Gastrocnemius medialis (tissue), 4 donors: ENCODE measurements at regions of chr17 and their contacts with region 1.

Region 1: DNA sequence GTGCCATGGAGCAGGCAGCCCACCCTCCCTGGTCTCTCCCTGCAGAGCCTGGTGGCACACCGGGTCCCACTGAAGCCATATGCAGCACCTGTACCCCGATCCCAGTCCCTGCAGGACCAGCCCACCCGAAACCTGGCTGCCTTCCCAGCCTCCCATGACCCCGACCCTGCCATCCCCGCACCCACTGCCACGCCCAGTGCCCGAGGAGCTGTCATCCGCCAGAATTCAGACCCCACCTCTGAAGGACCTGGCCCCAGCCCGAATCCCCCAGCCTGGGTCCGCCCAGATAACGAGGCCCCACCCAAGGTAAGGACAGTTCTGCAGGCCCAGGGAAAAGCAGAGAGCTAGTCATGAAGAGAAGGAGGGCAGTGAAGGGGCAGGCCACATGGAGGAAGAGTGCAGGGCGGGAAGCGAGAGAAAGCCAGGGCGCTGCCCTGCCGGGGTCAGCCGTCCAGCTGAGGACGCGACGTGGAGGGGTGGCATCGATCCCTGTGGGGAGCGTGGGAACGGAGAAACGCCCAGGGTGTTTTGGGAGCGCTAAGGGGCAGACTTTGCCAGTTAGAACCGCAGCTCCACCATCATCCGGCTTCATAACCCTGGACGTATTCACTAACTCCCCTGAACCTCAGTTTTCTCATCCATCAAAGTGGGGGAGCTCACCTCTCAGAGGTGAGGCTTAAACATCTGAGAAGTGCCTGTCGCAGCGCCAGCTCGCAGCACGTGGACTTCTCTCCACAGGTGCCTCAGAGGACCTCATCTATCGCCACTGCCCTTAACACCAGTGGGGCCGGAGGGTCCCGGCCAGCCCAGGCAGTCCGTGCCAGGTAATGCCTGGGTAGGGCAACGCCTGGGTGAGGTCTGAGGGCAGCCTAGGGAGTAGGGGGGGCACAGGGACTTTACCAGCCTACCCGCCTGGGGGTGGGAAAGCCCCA is 7.7 kb upstream of the C17orf107 start:
- DNase-seq: no peak
- ATAC-seq: no peak
- H3K4me3 ChIP-seq: no peak overlapping the region
- H3K27ac ChIP-seq: no peak overlapping the region
- H3K4me1 ChIP-seq: no peaks in the 10 kb centered on the region
- H3K27me3 ChIP-seq: no peaks in the 10 kb centered on the region
- CTCF ChIP-seq: no peak
- POLR2A ChIP-seq: no peak

Region 2: GRCh38 chr17:4733073-4733531 is 158.6 kb before region 1 on chr17:
- in situ Hi-C with region 1: no loop called
- intact Hi-C with region 1: loop called (anchors 1 kb)
- DNase-seq: no peak
- ATAC-seq: no peak
- H3K4me3 ChIP-seq: no peak overlapping the region
- H3K27ac ChIP-seq: no peak overlapping the region
- H3K4me1 ChIP-seq: peaks cover 0 to 12% of the 10 kb centered on the region in 2 donors
- H3K27me3 ChIP-seq: peaks cover under 1 to 5% (median 2%) of the 10 kb centered on the region in 3 donors
- CTCF ChIP-seq: no peak
- POLR2A ChIP-seq: no peak

Region 3: DNA sequence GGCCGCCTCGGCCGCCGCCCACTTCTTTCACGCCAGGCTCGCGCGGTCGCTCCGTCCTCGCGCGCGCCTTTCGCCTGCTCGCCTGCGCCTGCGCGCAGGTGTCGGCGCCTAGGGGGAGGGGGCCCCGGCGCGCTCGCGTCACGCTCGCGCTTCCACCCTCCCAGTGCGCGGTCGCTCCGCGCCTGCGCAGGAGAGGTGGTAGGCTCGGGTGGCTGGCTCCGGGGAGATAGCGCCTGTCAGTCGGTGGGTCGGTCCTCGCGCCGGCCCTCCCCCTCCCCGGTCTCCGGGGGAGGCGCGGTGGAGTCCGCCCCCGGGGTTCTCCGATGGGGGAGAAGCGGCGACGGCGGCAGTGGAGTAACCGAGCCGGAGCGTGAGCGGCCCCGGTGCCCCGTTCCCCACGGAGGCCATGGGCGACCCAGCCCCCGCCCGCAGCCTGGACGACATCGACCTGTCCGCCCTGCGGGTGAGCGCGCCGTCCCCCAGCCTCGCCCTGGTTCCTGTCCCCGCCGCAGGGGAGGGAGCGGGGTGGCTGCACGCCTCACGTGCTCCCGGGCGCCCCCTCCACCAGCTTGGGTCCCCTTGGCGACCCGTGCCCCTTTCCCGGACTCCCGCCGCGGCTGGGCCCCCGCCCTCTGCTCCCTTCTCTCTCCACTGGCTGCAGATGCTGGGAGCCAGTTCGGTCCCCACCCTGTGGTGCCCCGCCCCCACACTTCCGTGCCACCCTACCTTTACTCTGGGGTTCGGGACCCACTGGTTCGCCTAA is 58.3 kb before region 1 on chr17 and contains the start of gene MINK1:
- in situ Hi-C with region 1: no loop called
- intact Hi-C with region 1: no loop called
- DNase-seq: peak; percentile 78 to 88
- ATAC-seq: peak; percentile 95 to 96
- H3K4me3 ChIP-seq: peak within 1 kb of the TSS; percentile 74 to 89 (median 80)
- H3K27ac ChIP-seq: peak within 1 kb of the TSS; percentile 83 to 96 (median 89)
- H3K4me1 ChIP-seq: peaks cover 19 to 34% of the 10 kb centered on the region in 2 donors
- H3K27me3 ChIP-seq: no peaks in the 10 kb centered on the region
- CTCF ChIP-seq: no peak
- POLR2A ChIP-seq: peak; percentile 91 to 93
- total RNA-seq, gene MINK1: 11.7 to 20.2 (median 15.3) TPM